CD14-positive monocyte (primary cell): ENCODE measurements at regions of chr11 and their contacts with region 1.

Region 1: DNA sequence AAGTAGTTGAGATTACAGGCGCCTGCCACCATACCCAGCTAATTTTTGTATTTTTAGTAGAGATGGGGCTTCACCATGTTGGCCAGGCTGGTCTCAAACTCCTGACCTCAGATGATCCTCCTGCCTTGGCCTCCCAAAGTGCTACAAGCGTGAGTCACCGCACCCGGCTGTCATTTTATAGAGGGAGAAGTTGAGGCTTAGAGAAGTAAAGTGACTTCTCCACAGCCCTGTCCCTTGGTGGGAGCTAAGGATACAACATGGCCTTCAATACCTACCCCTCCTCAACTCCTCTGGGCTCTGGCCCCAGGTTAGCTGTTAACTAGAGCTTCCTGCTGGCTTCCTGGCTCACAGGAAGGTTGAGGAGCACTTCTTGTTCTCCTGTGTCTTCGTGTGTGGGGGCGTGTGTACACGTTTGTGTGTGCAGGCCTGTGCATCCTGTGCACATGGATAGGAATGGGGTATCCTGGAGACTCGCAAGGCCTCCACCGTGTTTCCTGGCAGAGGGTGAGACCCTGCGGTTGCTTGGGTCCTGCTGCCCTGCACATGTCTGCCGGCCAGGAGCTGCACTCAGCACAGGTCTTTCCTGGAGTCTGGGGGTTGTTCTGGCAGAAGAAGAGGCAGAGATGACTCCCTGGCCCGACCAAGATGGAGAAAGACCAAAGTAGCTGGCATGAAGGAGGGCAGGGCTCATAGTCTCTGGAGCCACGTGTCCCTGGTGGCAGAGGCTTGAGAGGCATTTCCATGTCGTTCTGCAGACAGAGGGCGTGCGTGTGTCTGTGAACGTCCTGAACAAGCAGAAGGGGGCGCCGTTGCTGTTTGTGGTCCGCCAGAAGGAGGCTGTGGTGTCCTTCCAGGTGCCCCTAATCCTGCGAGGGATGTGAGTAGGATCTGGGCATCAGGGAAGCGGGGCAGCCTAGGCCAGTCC is 2.4 kb downstream of the SIDT2 start:
- DNase-seq: peak; percentile 68 to 79 (median 76)
- H3K4me3 ChIP-seq: peak overlapping the region in 1 of 3 experiments; percentile 98
- H3K4me3 Mint-ChIP-seq: peak overlapping the region; percentile 96 to 98
- H3K27ac ChIP-seq: peak overlapping the region; percentile 63 to 69
- H3K27ac Mint-ChIP-seq: peak overlapping the region in 6 of 7 donors; percentile 40 to 96 (median 77)
- H3K4me1 ChIP-seq: peaks cover 42 to 54% of the 10 kb centered on the region in 2 donors
- H3K4me1 Mint-ChIP-seq: peaks cover 39% of the 10 kb centered on the region
- H3K27me3 ChIP-seq: no peaks in the 10 kb centered on the region
- H3K27me3 Mint-ChIP-seq: peaks cover 0 to 4% (median 0%) of the 10 kb centered on the region in 3 donors
- CTCF ChIP-seq: peak; percentile 85

Region 2: GRCh38 chr11:116913000-116913399 is 267.9 kb before region 1 on chr11:
- intact Hi-C with region 1: no loop called
- DNase-seq: peak; percentile 72 to 93 (median 92)
- H3K4me3 ChIP-seq: peak overlapping the region in 1 of 3 experiments; percentile 52
- H3K4me3 Mint-ChIP-seq: peak overlapping the region in 1 of 2 donors; percentile 67
- H3K27ac ChIP-seq: peak overlapping the region in 1 of 2 donors; percentile 75
- H3K27ac Mint-ChIP-seq: peak overlapping the region; percentile 88 to 94 (median 91)
- H3K4me1 ChIP-seq: peaks cover 51 to 62% of the 10 kb centered on the region in 2 donors
- H3K4me1 Mint-ChIP-seq: peaks cover 59% of the 10 kb centered on the region
- H3K27me3 ChIP-seq: no peaks in the 10 kb centered on the region
- H3K27me3 Mint-ChIP-seq: no peaks in the 10 kb centered on the region
- CTCF ChIP-seq: no peak

Region 3: GRCh38 chr11:117020287-117020686 is 160.6 kb before region 1 on chr11:
- intact Hi-C with region 1: no loop called
- DNase-seq: no peak
- H3K4me3 ChIP-seq: no peak overlapping the region
- H3K4me3 Mint-ChIP-seq: no peak overlapping the region
- H3K27ac ChIP-seq: peak overlapping the region in 1 of 2 donors; percentile 1
- H3K27ac Mint-ChIP-seq: no peak overlapping the region
- H3K4me1 ChIP-seq: peaks cover 11 to 14% of the 10 kb centered on the region in 2 donors
- H3K4me1 Mint-ChIP-seq: peaks cover 52% of the 10 kb centered on the region
- H3K27me3 ChIP-seq: no peaks in the 10 kb centered on the region
- H3K27me3 Mint-ChIP-seq: no peaks in the 10 kb centered on the region
- CTCF ChIP-seq: no peak

Region 4: DNA sequence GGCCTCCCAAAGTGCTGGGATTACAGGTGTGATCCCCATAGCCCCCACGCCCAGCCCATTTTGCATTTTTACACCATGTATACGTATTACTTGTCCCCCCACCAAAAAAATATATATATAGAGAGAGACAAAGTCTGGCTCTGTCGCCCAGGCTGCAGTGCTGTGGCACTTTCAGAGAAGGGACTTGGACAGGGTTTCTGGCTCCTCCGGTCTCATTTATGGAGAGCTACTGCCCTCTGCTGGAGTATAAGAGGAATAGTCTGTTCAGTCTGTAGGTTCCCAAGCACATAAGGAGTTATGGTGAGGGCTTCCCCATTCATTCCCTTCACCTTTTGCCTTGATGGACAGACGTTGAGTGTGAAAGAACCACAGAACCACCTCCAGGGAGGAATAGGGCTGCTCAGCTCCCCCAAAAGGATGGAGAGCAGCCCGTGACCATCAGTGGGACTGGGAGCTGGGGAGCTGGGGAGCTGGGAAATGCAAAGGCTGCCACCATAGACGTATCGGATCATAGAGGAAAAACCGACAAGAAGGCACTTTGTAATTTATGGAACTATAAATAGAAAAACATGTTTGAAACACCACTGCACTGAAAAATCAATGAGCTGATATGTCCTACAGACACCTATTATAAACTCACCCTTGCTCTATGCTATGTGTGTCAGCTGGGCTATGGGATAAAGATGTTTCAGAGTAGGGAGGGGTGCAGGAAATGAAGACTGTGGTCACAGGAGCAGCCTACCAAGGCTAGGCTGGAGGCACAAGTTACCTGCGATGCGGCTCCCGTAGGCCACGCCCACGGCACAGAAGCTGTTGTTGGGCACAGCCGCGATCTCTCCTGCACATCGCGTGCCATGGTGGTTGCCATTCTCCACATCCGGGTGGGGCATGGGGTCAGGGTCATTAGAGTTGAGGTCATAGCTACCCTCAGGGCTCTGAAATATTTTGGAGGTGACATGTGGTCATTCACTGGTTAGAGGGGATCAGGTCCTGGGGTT is 45.8 kb after region 1 on chr11:
- intact Hi-C with region 1: loop called (anchors 5 kb)
- DNase-seq: peak; percentile 67 to 79 (median 74)
- H3K4me3 ChIP-seq: no peak overlapping the region
- H3K4me3 Mint-ChIP-seq: peak overlapping the region in 1 of 2 donors; percentile 34
- H3K27ac ChIP-seq: no peak overlapping the region
- H3K27ac Mint-ChIP-seq: peak overlapping the region in 4 of 7 donors; percentile 12 to 71 (median 40)
- H3K4me1 ChIP-seq: peaks cover 14 to 17% of the 10 kb centered on the region in 2 donors
- H3K4me1 Mint-ChIP-seq: peaks cover 20% of the 10 kb centered on the region
- H3K27me3 ChIP-seq: no peaks in the 10 kb centered on the region
- H3K27me3 Mint-ChIP-seq: no peaks in the 10 kb centered on the region
- CTCF ChIP-seq: peak; percentile 78